ENCODE measurements at regions of chr17 and their contacts with region 1.

Region 1: DNA sequence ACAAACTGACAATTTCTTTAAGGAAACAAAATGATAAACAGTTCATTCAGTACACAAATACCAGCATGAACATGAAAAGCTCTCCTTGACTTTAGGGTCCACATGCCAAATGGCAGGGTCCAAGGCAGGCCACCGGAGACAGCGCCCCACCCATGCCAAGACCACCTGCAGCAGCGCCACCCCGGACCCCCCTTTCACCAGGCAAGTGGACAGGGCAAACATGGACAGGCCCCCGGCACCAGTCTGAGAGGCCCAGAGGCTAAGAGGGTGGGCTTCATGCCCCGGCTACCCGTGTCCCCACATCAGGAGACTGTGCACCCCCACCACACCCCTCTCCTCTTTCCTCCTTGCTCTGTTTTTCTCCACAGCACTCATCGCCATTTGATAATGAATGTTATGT is 14.7 kb upstream of the ASGR2 start:
- DNase-seq: no peak
- H3K4me3 ChIP-seq: no peak overlapping the region
- H3K27ac ChIP-seq: no peak overlapping the region
- H3K4me1 ChIP-seq: no peaks in the 10 kb centered on the region
- H3K27me3 ChIP-seq: no peaks in the 10 kb centered on the region
- CTCF ChIP-seq: no peak

Region 2: GRCh38 chr17:8435245-8436168 is 1306.2 kb after region 1 on chr17 and contains the start of gene NDEL1:
- CTCF ChIA-PET with region 1: interaction called, 15 read pairs
- POLR2A ChIA-PET with region 1: no interaction called
- intact Hi-C with region 1: no loop called
- DNase-seq: peak; percentile 86 to 99
- H3K4me3 ChIP-seq: peak within 1 kb of the TSS; percentile 84
- H3K27ac ChIP-seq: peak within 1 kb of the TSS; percentile 86
- H3K4me1 ChIP-seq: peaks cover 9% of the 10 kb centered on the region; the same call in 1 of the 2 replicates
- H3K27me3 ChIP-seq: no peaks in the 10 kb centered on the region
- CTCF ChIP-seq: no peak
- total RNA-seq, gene NDEL1: 60.8 and 78.4 TPM in 2 replicates